Lower lobe of right lung (tissue), 2 donors: ENCODE measurements at regions of chr9 and their contacts with region 1.

Region 1: GRCh38 chr9:83526901-83527300 is 11.3 kb downstream of the FRMD3 start:
- DNase-seq: no peak
- ATAC-seq: no peak
- H3K4me3 ChIP-seq: no peak overlapping the region
- H3K27ac ChIP-seq: no peak overlapping the region
- H3K4me1 ChIP-seq: no peaks in the 10 kb centered on the region
- H3K27me3 ChIP-seq: no peaks in the 10 kb centered on the region
- CTCF ChIP-seq: no peak

Region 2: DNA sequence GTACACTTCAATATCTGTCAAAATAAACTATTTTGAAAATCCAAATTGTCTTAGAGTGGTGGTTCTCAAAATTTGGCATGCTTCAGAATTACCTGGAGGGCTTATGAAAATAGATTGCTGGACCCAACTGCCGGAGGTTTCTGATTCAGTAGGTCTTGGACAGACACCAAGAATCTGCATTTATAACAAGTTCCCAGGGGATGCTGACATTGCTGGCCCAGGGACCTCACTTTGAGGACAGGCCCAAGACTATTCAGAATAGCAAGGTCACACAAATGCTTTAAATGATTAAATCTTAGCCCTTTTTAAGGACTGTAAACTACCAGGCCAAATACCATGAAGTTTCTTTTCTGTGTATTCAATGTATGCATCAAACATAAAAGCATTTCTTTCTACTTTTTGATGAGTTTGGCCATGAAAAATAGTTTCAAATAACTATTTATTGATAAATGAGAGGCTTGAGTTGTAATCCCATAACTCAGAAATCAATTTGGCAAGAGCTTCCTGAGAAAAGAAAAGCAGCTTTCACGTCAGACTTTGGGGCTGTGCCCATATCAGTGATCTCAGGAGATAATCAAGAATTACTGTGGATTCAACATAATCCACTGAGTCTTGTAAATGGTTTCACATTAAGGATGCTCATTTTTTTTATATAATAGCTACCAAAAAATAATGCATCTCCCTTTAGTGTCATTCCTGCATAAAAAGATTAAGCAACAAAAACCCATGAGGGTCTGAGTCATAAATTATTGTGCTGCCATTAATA is 180.1 kb before region 1 on chr9:
- intact Hi-C with region 1: loop called (anchors 10 kb)
- DNase-seq: no peak
- ATAC-seq: no peak
- H3K4me3 ChIP-seq: no peak overlapping the region
- H3K27ac ChIP-seq: no peak overlapping the region
- H3K4me1 ChIP-seq: no peaks in the 10 kb centered on the region
- H3K27me3 ChIP-seq: no peaks in the 10 kb centered on the region
- CTCF ChIP-seq: no peak

Region 3: GRCh38 chr9:83384214-83384613 is 142.7 kb before region 1 on chr9:
- intact Hi-C with region 1: no loop called
- DNase-seq: no peak
- ATAC-seq: no peak
- H3K4me3 ChIP-seq: no peak overlapping the region
- H3K27ac ChIP-seq: no peak overlapping the region
- H3K4me1 ChIP-seq: no peaks in the 10 kb centered on the region
- H3K27me3 ChIP-seq: no peaks in the 10 kb centered on the region
- CTCF ChIP-seq: no peak

Region 4: DNA sequence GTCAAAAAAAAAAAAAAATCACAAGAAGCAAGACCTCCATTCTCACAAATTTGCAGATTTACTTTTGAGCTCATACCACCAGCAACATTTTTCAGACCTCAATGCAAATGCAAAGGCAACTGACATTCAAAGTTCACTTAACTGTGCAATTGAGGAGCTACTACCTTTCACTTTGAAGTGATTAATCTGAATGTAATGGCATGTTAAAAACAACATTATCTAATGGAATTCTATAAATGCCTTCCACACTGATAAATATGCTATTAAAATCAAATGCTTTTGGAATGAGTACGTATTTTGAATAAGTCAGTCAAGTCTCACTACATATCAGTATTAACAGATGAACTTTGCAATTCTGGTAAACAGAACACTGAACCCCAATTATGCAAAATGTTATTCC is 148.6 kb after region 1 on chr9:
- intact Hi-C with region 1: no loop called
- DNase-seq: no peak
- ATAC-seq: no peak
- H3K4me3 ChIP-seq: no peak overlapping the region
- H3K27ac ChIP-seq: no peak overlapping the region
- H3K4me1 ChIP-seq: no peaks in the 10 kb centered on the region
- H3K27me3 ChIP-seq: no peaks in the 10 kb centered on the region
- CTCF ChIP-seq: no peak